Stomach (tissue), 19 donors: ENCODE measurements at regions of chr21 and their contacts with region 1.

Region 1: GRCh38 chr21:34889716-34890469 is 159.2 kb downstream of the RUNX1 start:
- DNase-seq: peak; percentile 86 to 95
- H3K4me3 ChIP-seq: peak overlapping the region; percentile 58 to 73 (median 72)
- H3K27ac ChIP-seq: peak overlapping the region; percentile 91 to 100 (median 97)
- H3K4me1 ChIP-seq: peaks cover 15 to 53% (median 30%) of the 10 kb centered on the region in 4 donors
- H3K27me3 ChIP-seq: peaks cover 0 to 68% (median 21%) of the 10 kb centered on the region in 3 donors
- CTCF ChIP-seq: peak in 5 of 7 experiments; percentile 16 to 97 (median 83)
- EP300 ChIP-seq: no peak
- POLR2A ChIP-seq: no peak

Region 2: GRCh38 chr21:35048706-35049617 is 159.1 kb after region 1 on chr21 and contains the start of gene RUNX1:
- intact Hi-C with region 1: loop called (anchors 5 kb)
- DNase-seq: peak; percentile 52 to 62
- H3K4me3 ChIP-seq: peak within 1 kb of the TSS; percentile 20 to 43 (median 26)
- H3K27ac ChIP-seq: peak within 1 kb of the TSS; percentile 63 to 86 (median 73)
- H3K4me1 ChIP-seq: peaks cover 28 to 64% (median 49%) of the 10 kb centered on the region in 4 donors
- H3K27me3 ChIP-seq: no peaks in the 10 kb centered on the region
- CTCF ChIP-seq: no peak
- EP300 ChIP-seq: no peak
- POLR2A ChIP-seq: no peak
- total RNA-seq, gene RUNX1: 32.9 to 213 (median 83.0) TPM

Region 3: DNA sequence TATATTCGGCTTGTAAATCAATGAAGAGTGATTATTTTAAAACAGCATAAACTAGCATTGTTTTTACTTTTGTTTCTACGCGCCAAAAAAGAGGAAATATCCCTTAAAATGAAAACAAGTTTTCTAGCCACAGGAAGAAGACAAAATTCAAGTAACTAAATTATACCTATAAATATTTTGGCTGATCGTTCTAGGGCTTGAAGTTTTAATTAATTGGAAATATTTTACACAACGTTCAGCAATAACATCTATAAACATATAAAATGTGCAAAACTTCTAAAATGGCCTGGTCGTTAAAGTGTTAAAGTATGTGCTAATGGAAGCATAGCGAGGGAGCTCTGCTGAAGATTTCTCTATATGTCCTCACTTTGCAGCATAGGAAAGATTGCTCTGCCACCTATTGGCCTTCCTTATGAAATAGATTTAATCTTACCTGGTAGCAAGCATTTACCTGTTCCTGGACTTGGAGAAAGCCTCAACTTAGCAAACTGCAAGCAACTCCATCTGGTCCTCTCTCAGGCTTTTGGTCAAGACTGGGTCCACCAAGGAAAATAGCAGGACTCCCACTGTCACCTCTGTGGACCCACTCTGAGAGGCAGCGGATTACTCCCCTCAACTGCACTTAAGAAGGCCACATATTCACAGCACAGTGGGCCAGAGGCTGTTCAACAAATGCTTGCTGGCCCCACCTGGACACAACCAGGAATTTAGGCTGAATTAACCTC is 510.5 kb after region 1 on chr21:
- intact Hi-C with region 1: loop called (anchors 5 kb)
- DNase-seq: peak in 1 of 2 donors; percentile 89
- H3K4me3 ChIP-seq: no peak overlapping the region
- H3K27ac ChIP-seq: no peak overlapping the region
- H3K4me1 ChIP-seq: peaks cover 0 to 7% (median 0%) of the 10 kb centered on the region in 4 donors
- H3K27me3 ChIP-seq: peaks cover 0 to 4% (median 0%) of the 10 kb centered on the region in 3 donors
- CTCF ChIP-seq: peak in 4 of 7 experiments; percentile 20 to 69 (median 50)
- EP300 ChIP-seq: no peak
- POLR2A ChIP-seq: no peak